Activated naive CD4-positive, alpha-beta T cell treated with anti-CD3 and anti-CD28 coated beads for 36 hours (primary cell): ENCODE measurements at regions of chr19 and their contacts with region 1.

Region 1: DNA sequence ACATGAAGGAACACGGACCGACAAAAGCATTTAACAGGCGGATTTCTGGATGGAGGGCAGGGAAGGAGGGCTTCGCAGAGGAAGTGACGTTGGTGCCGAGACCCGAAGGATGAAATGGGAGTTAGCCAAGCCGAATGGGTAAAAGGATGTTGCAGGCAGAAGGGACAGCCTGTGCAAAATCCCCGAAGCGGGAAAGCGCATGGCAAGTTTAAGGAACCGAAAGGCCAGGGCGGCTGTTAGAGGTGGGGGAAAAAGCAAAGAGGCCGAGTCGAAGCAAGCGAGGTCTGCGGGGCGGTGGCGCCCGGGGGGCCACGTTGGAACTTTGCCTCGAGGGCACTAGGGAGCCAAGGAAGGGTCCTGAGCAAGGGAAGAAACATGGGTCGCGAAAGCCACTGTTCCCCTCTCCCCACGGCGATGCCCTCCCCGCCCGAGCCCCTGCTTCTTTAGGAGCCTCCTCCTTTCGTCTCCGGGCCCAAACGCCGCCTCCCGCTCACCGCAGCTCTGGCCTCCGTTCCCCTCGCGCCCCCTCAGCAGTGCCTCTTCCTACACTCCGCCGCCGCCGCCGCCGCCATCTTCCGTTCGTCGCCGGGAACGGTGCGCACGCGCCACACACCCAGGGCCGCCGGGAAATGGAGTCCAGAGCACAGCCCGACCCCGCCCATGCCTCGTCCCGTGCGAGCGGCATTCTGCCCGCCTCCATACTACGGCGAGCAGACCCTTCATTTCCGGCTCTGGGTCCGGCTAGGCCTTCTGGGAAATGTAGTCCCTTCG is at the start of gene SYMPK:
- DNase-seq: peak; percentile 99
- H3K4me3 Mint-ChIP-seq: peak within 1 kb of the TSS; percentile 88
- H3K27ac Mint-ChIP-seq: peak within 1 kb of the TSS; percentile 94
- H3K4me1 Mint-ChIP-seq: peaks cover 24% of the 10 kb centered on the region
- H3K27me3 Mint-ChIP-seq: peaks cover 23% of the 10 kb centered on the region
- total RNA-seq, gene SYMPK: 96.9 to 97.4 TPM

Region 2: GRCh38 chr19:45717166-45717982 is 145.4 kb before region 1 on chr19:
- CTCF ChIA-PET with region 1: no interaction called
- intact Hi-C with region 1: loop called (anchors 1 kb)
- DNase-seq: peak; percentile 99
- H3K4me3 Mint-ChIP-seq: peak overlapping the region; percentile 96
- H3K27ac Mint-ChIP-seq: peak overlapping the region; percentile 97
- H3K4me1 Mint-ChIP-seq: peaks cover 41% of the 10 kb centered on the region
- H3K27me3 Mint-ChIP-seq: no peaks in the 10 kb centered on the region

Region 3: GRCh38 chr19:45792470-45793177 is 70.1 kb before region 1 on chr19 and contains the start of gene DMWD:
- CTCF ChIA-PET with region 1: no interaction called
- intact Hi-C with region 1: loop called (anchors 1 kb)
- DNase-seq: peak; percentile 100
- H3K4me3 Mint-ChIP-seq: peak within 1 kb of the TSS; percentile 93
- H3K27ac Mint-ChIP-seq: peak within 1 kb of the TSS; percentile 71
- H3K4me1 Mint-ChIP-seq: peaks cover 24% of the 10 kb centered on the region
- H3K27me3 Mint-ChIP-seq: peaks cover 13% of the 10 kb centered on the region
- total RNA-seq, gene DMWD: 28.6 to 29.1 TPM

Region 4: DNA sequence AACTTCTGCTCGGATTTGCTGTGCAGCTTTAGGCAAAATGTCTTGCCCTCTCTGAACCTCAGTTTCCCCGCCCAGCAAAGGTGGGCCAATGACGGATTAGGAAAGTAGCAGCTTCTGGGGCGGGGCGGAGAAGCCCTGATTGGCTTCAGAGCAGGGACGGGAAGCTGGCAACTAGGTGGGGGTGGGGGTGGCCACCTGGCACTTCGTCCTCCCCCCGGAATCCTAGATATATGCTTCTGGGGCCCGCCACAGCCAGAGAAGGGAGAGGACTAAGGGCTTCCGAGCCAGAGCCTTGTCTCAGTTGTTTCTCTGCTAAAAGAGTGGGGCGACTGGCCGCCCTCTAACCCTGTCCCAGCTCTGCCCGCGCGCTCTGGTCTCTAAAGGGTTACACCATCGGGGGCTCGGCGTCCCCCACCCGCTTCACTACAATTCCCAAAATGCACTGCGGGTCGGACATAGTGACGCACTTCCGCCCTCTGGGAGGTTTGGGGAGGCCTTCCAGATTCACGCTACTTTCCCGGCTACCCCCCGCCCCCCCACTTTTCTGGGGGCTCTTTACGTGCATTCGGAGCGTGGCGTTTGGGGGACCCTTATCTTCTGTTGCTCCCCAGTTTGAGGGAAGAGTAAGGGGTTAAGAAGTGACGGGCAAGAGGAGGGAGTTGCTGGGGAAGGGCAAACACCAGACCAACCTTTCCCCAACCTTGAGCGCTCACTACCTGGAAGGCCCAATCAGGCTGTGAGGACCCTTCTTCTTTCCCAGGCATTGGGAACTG is 23.9 kb after region 1 on chr19:
- CTCF ChIA-PET with region 1: interaction called, 84 read pairs
- intact Hi-C with region 1: loop called (anchors 1 kb)
- DNase-seq: peak; percentile 98
- H3K4me3 Mint-ChIP-seq: peak overlapping the region; percentile 94
- H3K27ac Mint-ChIP-seq: peak overlapping the region; percentile 95
- H3K4me1 Mint-ChIP-seq: peaks cover 25% of the 10 kb centered on the region
- H3K27me3 Mint-ChIP-seq: no peaks in the 10 kb centered on the region

Region 5: GRCh38 chr19:45994989-45995714 is 132.4 kb after region 1 on chr19 and contains the start of gene CCDC61:
- CTCF ChIA-PET with region 1: interaction called, 8 read pairs
- intact Hi-C with region 1: loop called (anchors 1 kb)
- DNase-seq: peak; percentile 98
- H3K4me3 Mint-ChIP-seq: peak within 1 kb of the TSS; percentile 40
- H3K27ac Mint-ChIP-seq: no peak within 1 kb of the TSS
- H3K4me1 Mint-ChIP-seq: peaks cover 23% of the 10 kb centered on the region
- H3K27me3 Mint-ChIP-seq: no peaks in the 10 kb centered on the region
- total RNA-seq, gene CCDC61: 26.4 to 29.3 TPM